ENCODE measurements at regions of chr15 and their contacts with region 1.

Region 1: GRCh38 chr15:56491110-56491722 is 26.3 kb upstream of the MNS1 start:
- DNase-seq: peak; percentile 70
- CTCF ChIP-seq: peak; percentile 92

Region 2: DNA sequence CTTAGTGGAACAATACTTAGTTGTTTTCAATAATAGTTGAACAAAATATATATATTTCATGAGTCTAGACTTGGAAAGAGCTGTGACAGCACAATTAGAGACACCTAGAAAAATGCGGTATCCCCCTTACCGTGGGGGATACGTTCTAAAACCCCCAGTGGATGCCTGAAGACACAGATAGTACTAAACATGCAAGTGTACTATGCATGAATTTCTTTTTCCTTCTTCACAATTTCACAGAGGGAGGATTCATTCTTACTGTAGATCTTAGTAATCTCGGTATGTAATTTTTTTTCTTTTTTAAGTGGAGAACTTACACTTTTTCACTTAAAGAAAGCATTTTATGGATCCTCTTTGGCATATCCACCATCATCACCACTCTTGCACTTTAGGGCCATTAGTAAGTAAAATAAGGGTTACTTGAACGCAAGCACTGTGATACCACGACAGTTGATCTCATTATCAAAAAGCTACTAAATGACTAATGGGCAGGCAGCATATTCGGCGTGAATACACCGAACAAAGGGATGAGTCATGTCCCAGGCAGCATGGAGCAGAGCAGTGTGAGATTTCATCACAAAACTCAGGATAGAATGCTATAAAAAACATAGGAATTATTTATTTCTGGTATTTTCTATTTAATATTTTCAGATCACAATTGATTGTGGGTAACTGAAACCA is 314.4 kb after region 1 on chr15:
- in situ Hi-C with region 1: no loop called
- DNase-seq: no peak
- CTCF ChIP-seq: no peak

Region 3: DNA sequence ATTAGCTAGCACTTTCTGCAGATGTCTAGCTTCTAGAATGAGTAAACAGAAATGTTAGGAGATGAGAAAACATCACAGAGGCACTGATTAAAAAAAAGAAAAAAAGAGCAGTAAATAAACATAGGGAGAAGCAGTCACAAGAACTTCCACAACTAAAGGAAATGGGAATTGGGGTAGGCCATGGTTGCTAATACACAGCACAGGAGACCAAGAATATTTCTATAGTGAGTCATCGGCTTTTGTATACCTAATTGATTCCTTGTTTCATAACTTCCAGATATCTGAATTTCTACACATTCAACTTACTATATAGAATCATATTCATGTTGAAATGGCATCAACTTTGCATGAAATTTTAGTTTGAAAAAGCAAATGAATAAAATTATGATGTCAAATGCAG is 380.0 kb after region 1 on chr15:
- in situ Hi-C with region 1: loop called (anchors 10 kb)
- DNase-seq: no peak
- CTCF ChIP-seq: no peak

Region 4: GRCh38 chr15:57146506-57147201 is 655.4 kb after region 1 on chr15:
- in situ Hi-C with region 1: loop called (anchors 25 kb)
- DNase-seq: peak; percentile 13
- CTCF ChIP-seq: peak; percentile 58

Region 5: DNA sequence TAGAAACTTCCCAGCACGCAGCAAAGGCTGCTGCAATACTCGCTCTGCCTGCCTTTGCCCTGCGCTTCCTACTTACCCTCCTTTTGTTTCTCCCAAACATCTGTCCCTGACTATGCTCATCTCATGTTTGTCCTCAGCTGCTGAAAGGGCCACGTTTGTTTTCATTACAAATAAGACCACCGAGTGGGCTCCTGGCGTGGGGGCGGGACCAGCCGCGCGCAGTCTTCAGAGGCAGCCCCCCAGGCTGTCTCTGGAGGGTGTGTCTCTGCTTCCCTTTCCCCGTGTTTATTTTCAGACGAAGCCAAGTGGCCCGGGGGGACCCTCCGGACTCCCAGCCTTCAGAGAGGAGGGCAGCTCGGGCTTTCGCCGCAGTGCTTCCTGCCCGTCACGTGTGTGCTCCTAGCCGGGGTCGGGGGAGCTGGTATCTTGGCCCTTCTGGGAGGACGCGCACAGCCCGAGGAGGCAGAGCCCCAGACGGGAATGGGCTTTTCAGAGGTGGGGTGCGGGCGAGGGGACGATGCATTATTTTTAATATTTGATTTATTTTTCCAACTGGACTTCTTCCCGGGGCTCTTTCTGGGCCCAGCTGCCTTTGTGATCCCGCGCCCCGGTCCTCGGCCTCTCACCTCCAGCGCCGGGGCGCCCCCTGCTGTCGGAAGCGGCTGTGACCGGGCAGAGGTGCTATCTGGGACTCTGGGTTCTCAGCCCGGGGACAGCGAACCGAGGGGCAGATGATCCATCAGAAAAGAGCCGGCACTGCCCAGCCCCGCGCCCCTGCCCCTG is 815.1 kb after region 1 on chr15:
- in situ Hi-C with region 1: loop called (anchors 10 kb)
- DNase-seq: peak; percentile 91
- CTCF ChIP-seq: peak; percentile 91

Region 6: GRCh38 chr15:57527382-57528091 is 1036.3 kb after region 1 on chr15:
- in situ Hi-C with region 1: loop called (anchors 25 kb)
- DNase-seq: peak; percentile 65
- CTCF ChIP-seq: peak; percentile 65